ENCODE measurements at regions of chr19 and their contacts with region 1.

Region 1: GRCh38 chr19:17245244-17245984 is at the start of gene NR2F6:
- DNase-seq: peak in 3 of 9 donors; percentile 18 to 38 (median 26)
- ATAC-seq: peak; percentile 28
- H3K4me3 ChIP-seq: peak within 1 kb of the TSS; percentile 55
- H3K4me3 Mint-ChIP-seq: peak within 1 kb of the TSS; percentile 71 to 95 (median 86)
- H3K27ac ChIP-seq: peak within 1 kb of the TSS; percentile 60
- H3K27ac Mint-ChIP-seq: peak within 1 kb of the TSS in 7 of 9 donors; percentile 31 to 86 (median 74)
- H3K4me1 ChIP-seq: peaks cover 0 to 11% of the 10 kb centered on the region in 2 donors
- H3K4me1 Mint-ChIP-seq: peaks cover 0 to 14% (median 5%) of the 10 kb centered on the region in 7 donors
- H3K27me3 ChIP-seq: no peaks in the 10 kb centered on the region
- H3K27me3 Mint-ChIP-seq: peaks cover 0 to 16% (median 0%) of the 10 kb centered on the region in 5 donors
- total RNA-seq, gene NR2F6: 2.2 to 7.8 (median 7.0) TPM

Region 2: GRCh38 chr19:16751733-16752132 is 493.7 kb before region 1 on chr19:
- CTCF ChIA-PET with region 1: no interaction called
- POLR2A ChIA-PET with region 1: no interaction called
- intact Hi-C with region 1: no loop called
- DNase-seq: no peak
- ATAC-seq: no peak
- H3K4me3 ChIP-seq: no peak overlapping the region
- H3K4me3 Mint-ChIP-seq: no peak overlapping the region
- H3K27ac ChIP-seq: no peak overlapping the region
- H3K27ac Mint-ChIP-seq: no peak overlapping the region
- H3K4me1 ChIP-seq: no peaks in the 10 kb centered on the region
- H3K4me1 Mint-ChIP-seq: peaks cover 0 to 9% (median 0%) of the 10 kb centered on the region in 7 donors
- H3K27me3 ChIP-seq: no peaks in the 10 kb centered on the region
- H3K27me3 Mint-ChIP-seq: peaks cover 0 to 26% (median 15%) of the 10 kb centered on the region in 5 donors

Region 3: GRCh38 chr19:17205237-17206140 is 39.9 kb before region 1 on chr19:
- CTCF ChIA-PET with region 1: no interaction called
- POLR2A ChIA-PET with region 1: no interaction called
- intact Hi-C with region 1: no loop called
- DNase-seq: peak; percentile 41 to 68 (median 54)
- ATAC-seq: peak; percentile 82
- H3K4me3 ChIP-seq: no peak overlapping the region
- H3K4me3 Mint-ChIP-seq: no peak overlapping the region
- H3K27ac ChIP-seq: no peak overlapping the region
- H3K27ac Mint-ChIP-seq: peak overlapping the region in 1 of 9 donors; percentile 38
- H3K4me1 ChIP-seq: no peaks in the 10 kb centered on the region
- H3K4me1 Mint-ChIP-seq: peaks cover 0 to 16% (median 0%) of the 10 kb centered on the region in 7 donors
- H3K27me3 ChIP-seq: no peaks in the 10 kb centered on the region
- H3K27me3 Mint-ChIP-seq: no peaks in the 10 kb centered on the region

Region 4: DNA sequence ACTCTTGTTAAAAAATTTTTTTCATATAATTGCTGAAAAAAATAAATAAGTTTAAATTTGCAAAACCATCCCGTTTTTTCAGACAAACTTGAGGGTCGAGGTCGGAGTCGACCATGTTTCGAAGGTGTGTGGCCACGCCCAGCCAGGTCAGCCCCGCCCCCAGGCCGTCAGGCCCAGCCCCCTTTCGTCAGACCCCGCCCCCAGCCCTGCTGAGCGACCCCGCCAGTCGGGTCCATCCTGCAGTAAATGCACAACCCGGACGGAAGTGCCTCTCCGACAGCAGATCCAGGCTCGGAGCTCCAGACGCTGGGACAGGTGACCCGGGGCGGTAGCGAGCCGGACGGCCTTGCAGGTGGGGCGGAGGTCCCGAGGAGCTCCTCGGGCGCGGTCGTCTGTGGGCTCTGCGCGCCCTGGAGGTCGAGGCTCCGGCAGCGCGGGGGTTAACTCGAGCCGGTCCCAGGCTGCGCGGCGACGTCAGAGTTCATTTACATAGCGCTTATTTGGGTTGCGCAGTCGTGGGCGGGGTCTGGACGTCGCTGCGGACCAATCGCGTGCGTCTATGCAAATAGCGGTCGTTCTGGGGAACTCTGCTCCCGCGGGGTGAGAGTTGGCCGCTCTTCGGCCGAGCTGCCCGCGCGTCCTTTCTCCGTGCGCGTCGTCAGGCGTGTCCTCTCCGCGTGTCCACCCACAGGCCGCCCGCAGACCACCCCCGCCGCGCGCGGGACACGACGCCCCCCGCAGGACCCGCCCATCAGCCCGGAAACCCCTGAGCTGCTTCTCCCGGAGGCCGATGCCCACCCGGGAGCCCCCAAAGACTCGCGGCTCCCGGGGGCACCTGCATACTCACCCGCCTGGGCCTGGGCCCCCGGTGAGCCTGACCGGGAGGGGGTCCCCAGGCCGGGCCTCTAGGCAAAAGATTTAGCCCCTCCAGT is 19.1 kb before region 1 on chr19 and contains the start of gene OCEL1:
- CTCF ChIA-PET with region 1: interaction called, 4 read pairs
- POLR2A ChIA-PET with region 1: interaction called, 4 read pairs
- intact Hi-C with region 1: loop called in 1 of 2 experiments (anchors 1 kb)
- DNase-seq: peak; percentile 91 to 98 (median 97)
- ATAC-seq: peak; percentile 94
- H3K4me3 ChIP-seq: peak within 1 kb of the TSS; percentile 98
- H3K4me3 Mint-ChIP-seq: peak within 1 kb of the TSS; percentile 82 to 98 (median 94)
- H3K27ac ChIP-seq: peak within 1 kb of the TSS; percentile 81
- H3K27ac Mint-ChIP-seq: peak within 1 kb of the TSS; percentile 86 to 99 (median 97)
- H3K4me1 ChIP-seq: peaks cover 0 to 2% of the 10 kb centered on the region in 2 donors
- H3K4me1 Mint-ChIP-seq: peaks cover 3 to 8% (median 5%) of the 10 kb centered on the region in 7 donors
- H3K27me3 ChIP-seq: no peaks in the 10 kb centered on the region
- H3K27me3 Mint-ChIP-seq: no peaks in the 10 kb centered on the region
- total RNA-seq, gene OCEL1: 21.8 to 32.8 (median 29.8) TPM

Region 5: GRCh38 chr19:17260842-17261325 is 15.5 kb after region 1 on chr19:
- CTCF ChIA-PET with region 1: no interaction called
- POLR2A ChIA-PET with region 1: interaction called, 7 read pairs
- intact Hi-C with region 1: loop called (anchors 2 kb)
- DNase-seq: peak; percentile 76 to 90 (median 86)
- ATAC-seq: peak; percentile 100
- H3K4me3 ChIP-seq: no peak overlapping the region
- H3K4me3 Mint-ChIP-seq: no peak overlapping the region
- H3K27ac ChIP-seq: no peak overlapping the region
- H3K27ac Mint-ChIP-seq: peak overlapping the region in 3 of 9 donors; percentile 2 to 82 (median 24)
- H3K4me1 ChIP-seq: peaks cover 0 to 10% of the 10 kb centered on the region in 2 donors
- H3K4me1 Mint-ChIP-seq: peaks cover 5 to 14% (median 13%) of the 10 kb centered on the region in 7 donors
- H3K27me3 ChIP-seq: no peaks in the 10 kb centered on the region
- H3K27me3 Mint-ChIP-seq: no peaks in the 10 kb centered on the region

Region 6: GRCh38 chr19:17311455-17312248 is 66.2 kb after region 1 on chr19:
- CTCF ChIA-PET with region 1: no interaction called
- POLR2A ChIA-PET with region 1: no interaction called
- intact Hi-C with region 1: no loop called
- DNase-seq: no peak
- ATAC-seq: no peak
- H3K4me3 ChIP-seq: no peak overlapping the region
- H3K4me3 Mint-ChIP-seq: peak overlapping the region; percentile 9 to 98 (median 64)
- H3K27ac ChIP-seq: no peak overlapping the region
- H3K27ac Mint-ChIP-seq: peak overlapping the region in 3 of 9 donors; percentile 72 to 81 (median 75)
- H3K4me1 ChIP-seq: peaks cover 16 to 17% of the 10 kb centered on the region in 2 donors
- H3K4me1 Mint-ChIP-seq: peaks cover 24 to 41% (median 33%) of the 10 kb centered on the region in 7 donors
- H3K27me3 ChIP-seq: no peaks in the 10 kb centered on the region
- H3K27me3 Mint-ChIP-seq: no peaks in the 10 kb centered on the region